ENCODE measurements at regions of chr16 and their contacts with region 1.

Region 1: GRCh38 chr16:64159976-64160375 is 961.9 kb downstream of the CDH11 start:
- DNase-seq: no peak
- ATAC-seq: no peak
- H3K4me3 ChIP-seq: no peak overlapping the region
- H3K27ac ChIP-seq: no peak overlapping the region
- H3K4me1 ChIP-seq: no peaks in the 10 kb centered on the region
- H3K27me3 ChIP-seq: no peaks in the 10 kb centered on the region
- CTCF ChIP-seq: no peak
- POLR2A ChIP-seq: no peak

Region 2: DNA sequence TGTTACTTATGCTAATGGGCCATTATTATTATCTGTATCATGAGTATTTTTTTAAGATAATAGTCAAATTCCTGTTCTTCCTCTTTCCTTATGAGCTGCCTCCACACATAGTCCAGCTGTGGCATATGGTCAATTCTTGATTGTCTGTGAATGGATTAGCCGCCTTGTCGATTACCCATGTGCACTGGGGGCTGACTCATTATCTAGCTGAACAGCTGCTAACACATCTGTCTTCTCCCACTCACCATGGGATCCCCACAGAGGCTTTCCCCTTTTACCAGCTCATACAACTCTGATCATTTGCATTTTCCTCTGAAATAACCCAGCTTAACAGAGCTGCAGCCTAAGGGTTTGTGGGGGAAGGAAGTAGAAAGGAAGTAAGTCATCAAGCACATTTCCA is 46.9 kb after region 1 on chr16:
- in situ Hi-C with region 1: no loop called
- intact Hi-C with region 1: no loop called
- DNase-seq: no peak
- ATAC-seq: no peak
- H3K4me3 ChIP-seq: no peak overlapping the region
- H3K27ac ChIP-seq: no peak overlapping the region
- H3K4me1 ChIP-seq: no peaks in the 10 kb centered on the region
- H3K27me3 ChIP-seq: no peaks in the 10 kb centered on the region
- CTCF ChIP-seq: no peak
- POLR2A ChIP-seq: no peak

Region 3: DNA sequence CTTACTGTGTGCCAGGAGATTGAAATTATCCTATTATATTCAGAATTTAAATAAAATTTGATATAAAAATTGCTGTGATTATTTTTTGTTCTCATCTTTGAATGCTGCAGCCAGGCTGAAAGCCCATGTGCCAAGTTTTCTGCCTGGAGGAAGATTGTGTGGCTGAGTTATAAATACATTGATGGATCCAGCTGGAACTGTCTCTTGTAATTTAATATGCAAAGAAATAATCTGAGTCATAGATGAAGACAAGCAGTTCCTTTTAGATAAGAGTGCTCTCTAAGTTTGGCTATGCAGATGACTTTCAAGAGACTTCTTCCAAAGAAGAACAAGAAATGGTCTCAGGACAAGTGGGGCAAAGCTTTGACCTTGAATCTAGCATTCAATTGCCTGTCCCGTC is 90.9 kb after region 1 on chr16:
- in situ Hi-C with region 1: no loop called
- intact Hi-C with region 1: loop called (anchors 5 kb)
- DNase-seq: peak in 1 of 2 donors; percentile 14
- ATAC-seq: peak; percentile 87 to 96
- H3K4me3 ChIP-seq: no peak overlapping the region
- H3K27ac ChIP-seq: peak overlapping the region in 3 of 4 donors; percentile 54 to 79 (median 72)
- H3K4me1 ChIP-seq: peaks cover 29 to 33% of the 10 kb centered on the region in 2 donors
- H3K27me3 ChIP-seq: no peaks in the 10 kb centered on the region
- CTCF ChIP-seq: no peak
- POLR2A ChIP-seq: no peak

Region 4: DNA sequence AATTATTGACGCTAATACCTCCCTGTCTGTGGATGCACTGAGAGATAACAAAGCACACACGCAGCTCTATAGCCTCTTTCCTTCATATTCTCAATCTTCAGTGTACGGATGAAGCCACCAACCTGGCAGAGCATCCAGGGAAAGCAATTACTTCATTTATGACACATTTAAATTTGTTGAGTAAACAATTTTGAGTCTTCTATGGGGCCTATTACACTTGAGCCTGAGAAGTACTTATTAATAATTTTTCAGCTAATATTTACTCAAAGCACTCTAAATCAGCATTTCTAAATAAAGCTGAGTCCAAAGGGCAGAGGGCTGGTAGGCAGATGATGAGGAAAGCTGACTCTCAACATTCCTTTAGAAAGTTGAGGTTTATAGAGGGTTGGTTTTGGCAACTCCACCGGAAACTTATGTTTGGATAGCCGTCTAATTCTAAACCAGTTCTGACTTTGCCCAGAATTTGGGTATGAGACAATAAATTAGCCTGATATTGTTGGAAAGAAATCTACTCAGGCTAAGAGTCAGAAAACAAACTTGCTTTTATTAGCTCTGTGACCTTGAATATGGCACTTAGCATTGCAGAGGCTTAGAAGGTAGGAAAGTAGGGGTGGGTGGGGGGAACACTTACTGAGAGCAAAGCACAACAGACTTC is 318.4 kb after region 1 on chr16:
- in situ Hi-C with region 1: no loop called
- intact Hi-C with region 1: loop called (anchors 10 kb)
- DNase-seq: no peak
- ATAC-seq: no peak
- H3K4me3 ChIP-seq: no peak overlapping the region
- H3K27ac ChIP-seq: no peak overlapping the region
- H3K4me1 ChIP-seq: peaks cover 17% of the 10 kb centered on the region in 2 donors
- H3K27me3 ChIP-seq: no peaks in the 10 kb centered on the region
- CTCF ChIP-seq: no peak
- POLR2A ChIP-seq: no peak

Measured in gastrocnemius medialis (tissue), 4 donors.